ENCODE measurements at regions of chr15 and their contacts with region 1.

Region 1: GRCh38 chr15:52217186-52217585 is 26.0 kb upstream of the GNB5 start:
- DNase-seq: no peak
- H3K4me3 ChIP-seq: no peak overlapping the region
- H3K4me3 Mint-ChIP-seq: no peak overlapping the region
- H3K27ac ChIP-seq: no peak overlapping the region
- H3K27ac Mint-ChIP-seq: no peak overlapping the region
- H3K4me1 ChIP-seq: peaks cover 21% of the 10 kb centered on the region
- H3K4me1 Mint-ChIP-seq: peaks cover 13 to 29% (median 19%) of the 10 kb centered on the region in 4 donors
- H3K27me3 ChIP-seq: no peaks in the 10 kb centered on the region
- H3K27me3 Mint-ChIP-seq: peaks cover 0 to 1% of the 10 kb centered on the region in 2 donors

Region 2: DNA sequence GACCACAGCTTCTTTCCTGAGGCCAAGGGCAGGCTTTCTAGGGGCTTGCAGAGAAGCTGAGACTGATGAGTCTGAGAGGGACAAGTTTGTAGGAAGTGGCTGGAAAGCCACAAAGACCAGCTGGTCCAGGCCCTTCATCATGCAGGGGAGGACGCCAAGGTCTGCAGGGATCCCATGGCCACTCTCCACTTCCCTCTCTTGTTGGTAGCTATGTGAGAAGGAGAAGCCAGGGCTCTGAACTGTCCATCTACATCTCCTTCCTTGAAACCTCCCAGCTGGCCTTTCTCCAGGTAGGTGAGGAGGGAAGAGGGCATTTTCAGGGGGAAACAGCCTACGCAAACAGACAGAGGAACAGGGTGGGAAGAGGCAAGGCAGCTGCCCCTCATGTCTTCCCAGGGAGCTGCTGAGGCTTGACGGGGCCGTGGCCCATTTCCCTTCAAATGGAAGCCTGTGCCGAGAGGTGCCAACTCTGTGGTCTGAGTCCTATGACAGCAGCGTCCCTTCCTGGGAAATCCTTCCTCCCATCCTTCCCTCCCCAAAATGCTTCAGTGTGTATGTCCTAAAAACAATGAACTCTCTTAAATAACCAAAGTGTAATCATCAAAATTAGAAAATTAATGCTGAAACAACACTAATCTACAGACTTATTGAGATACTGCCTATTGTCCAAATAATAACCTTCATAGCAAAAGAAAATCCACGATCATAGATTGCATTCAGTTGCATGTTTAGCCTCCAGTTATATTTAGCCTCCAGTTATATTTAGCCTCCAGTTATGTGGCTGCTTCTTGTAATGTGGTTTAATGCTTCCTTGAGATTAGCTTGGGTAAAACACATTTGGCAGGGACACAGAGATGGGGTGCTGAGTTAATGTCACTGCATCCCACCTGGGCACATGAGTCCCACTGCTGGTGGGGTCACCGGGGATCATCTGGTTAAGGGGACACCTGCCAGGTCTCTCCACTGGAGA is 62.0 kb before region 1 on chr15:
- CTCF ChIA-PET with region 1: no interaction called
- POLR2A ChIA-PET with region 1: no interaction called
- intact Hi-C with region 1: no loop called
- DNase-seq: no peak
- H3K4me3 ChIP-seq: no peak overlapping the region
- H3K4me3 Mint-ChIP-seq: no peak overlapping the region
- H3K27ac ChIP-seq: no peak overlapping the region
- H3K27ac Mint-ChIP-seq: peak overlapping the region in 1 of 7 donors; percentile 8
- H3K4me1 ChIP-seq: no peaks in the 10 kb centered on the region
- H3K4me1 Mint-ChIP-seq: peaks cover 2 to 8% (median 4%) of the 10 kb centered on the region in 4 donors
- H3K27me3 ChIP-seq: no peaks in the 10 kb centered on the region
- H3K27me3 Mint-ChIP-seq: no peaks in the 10 kb centered on the region

Region 3: DNA sequence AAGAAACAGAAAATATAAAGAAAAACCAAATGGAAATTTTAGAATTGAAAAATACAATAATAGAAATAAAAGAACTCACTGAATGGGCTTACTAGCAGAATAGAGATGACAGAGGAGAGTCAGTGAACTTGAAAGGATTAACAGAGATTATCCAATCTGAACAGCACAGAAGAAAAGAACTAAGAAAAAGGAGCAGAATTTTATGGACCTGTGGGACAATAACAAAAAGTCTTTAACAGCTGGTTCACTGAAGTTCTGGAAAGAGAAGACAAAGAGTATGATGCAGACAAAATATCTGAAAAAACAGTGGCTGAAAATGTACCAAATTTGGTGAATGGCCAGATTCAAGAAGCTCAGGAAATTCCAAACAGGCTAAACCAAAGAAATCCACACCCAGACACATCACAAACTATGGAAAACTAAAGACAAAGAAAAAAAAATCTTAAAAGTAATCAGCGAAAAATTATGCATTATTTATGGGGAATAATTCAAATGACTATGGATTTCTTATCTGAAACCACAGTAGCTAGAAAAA is 16.3 kb before region 1 on chr15:
- CTCF ChIA-PET with region 1: no interaction called
- POLR2A ChIA-PET with region 1: no interaction called
- intact Hi-C with region 1: no loop called
- DNase-seq: no peak
- H3K4me3 ChIP-seq: no peak overlapping the region
- H3K4me3 Mint-ChIP-seq: no peak overlapping the region
- H3K27ac ChIP-seq: no peak overlapping the region
- H3K27ac Mint-ChIP-seq: no peak overlapping the region
- H3K4me1 ChIP-seq: no peaks in the 10 kb centered on the region
- H3K4me1 Mint-ChIP-seq: no peaks in the 10 kb centered on the region
- H3K27me3 ChIP-seq: no peaks in the 10 kb centered on the region
- H3K27me3 Mint-ChIP-seq: no peaks in the 10 kb centered on the region

Region 4: GRCh38 chr15:52233405-52233804 is 16.2 kb after region 1 on chr15:
- CTCF ChIA-PET with region 1: interaction called, 50 read pairs
- POLR2A ChIA-PET with region 1: interaction called, 15 read pairs
- intact Hi-C with region 1: no loop called
- DNase-seq: no peak
- H3K4me3 ChIP-seq: no peak overlapping the region
- H3K4me3 Mint-ChIP-seq: peak overlapping the region in 2 of 8 donors; percentile 7 to 23
- H3K27ac ChIP-seq: no peak overlapping the region
- H3K27ac Mint-ChIP-seq: peak overlapping the region; percentile 20 to 82 (median 72)
- H3K4me1 ChIP-seq: peaks cover 39% of the 10 kb centered on the region
- H3K4me1 Mint-ChIP-seq: peaks cover 13 to 40% (median 28%) of the 10 kb centered on the region in 4 donors
- H3K27me3 ChIP-seq: no peaks in the 10 kb centered on the region
- H3K27me3 Mint-ChIP-seq: no peaks in the 10 kb centered on the region

Region 5: DNA sequence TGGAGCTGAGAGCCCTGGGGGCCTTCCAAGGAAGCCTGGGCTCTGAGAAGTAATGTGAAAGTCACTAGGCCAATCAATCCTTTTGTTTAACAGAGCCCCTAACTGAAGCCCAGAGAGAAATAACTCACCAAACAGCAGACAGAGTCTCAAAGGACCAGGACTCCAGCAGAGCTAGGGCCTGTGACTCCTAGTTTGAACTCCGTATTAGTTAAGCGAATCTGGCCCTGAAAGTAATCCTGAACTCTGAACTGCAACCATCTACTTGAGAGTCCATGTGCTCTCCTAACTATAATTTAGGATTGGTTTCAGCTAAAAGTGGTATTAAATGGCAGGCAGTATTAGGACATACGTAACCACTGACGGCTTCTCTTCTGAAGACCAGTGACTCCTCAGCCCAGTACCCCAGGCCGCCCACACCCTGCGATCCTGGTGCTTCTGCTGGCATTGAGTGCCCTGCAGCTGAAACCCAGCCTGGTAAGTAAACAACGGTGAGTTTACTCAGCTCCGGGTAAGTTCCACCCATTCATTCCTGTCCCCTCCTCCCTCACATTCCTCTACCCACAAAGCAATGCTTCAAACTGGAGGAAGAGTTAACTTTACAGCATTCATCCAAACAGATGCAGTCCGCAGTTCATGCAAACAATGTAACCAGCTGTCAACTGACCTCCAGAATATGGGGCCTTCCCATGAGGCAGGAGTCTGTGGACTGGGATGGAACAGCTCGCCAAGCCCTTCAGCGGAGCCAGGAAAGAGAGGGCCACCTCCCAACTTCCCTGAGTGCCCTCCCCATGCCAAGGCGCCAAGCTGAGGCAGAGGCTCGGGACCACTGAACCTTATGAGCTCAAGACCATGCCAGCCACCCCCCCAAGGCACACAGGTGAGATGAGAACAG is 71.1 kb after region 1 on chr15:
- CTCF ChIA-PET with region 1: no interaction called
- POLR2A ChIA-PET with region 1: no interaction called
- intact Hi-C with region 1: no loop called
- DNase-seq: no peak
- H3K4me3 ChIP-seq: no peak overlapping the region
- H3K4me3 Mint-ChIP-seq: no peak overlapping the region
- H3K27ac ChIP-seq: no peak overlapping the region
- H3K27ac Mint-ChIP-seq: no peak overlapping the region
- H3K4me1 ChIP-seq: no peaks in the 10 kb centered on the region
- H3K4me1 Mint-ChIP-seq: no peaks in the 10 kb centered on the region
- H3K27me3 ChIP-seq: no peaks in the 10 kb centered on the region
- H3K27me3 Mint-ChIP-seq: peaks cover 9 to 16% of the 10 kb centered on the region in 2 donors

Measured in CD4-positive, alpha-beta memory T cell (primary cell).